ENCODE measurements at regions of chr6 and their contacts with region 1.

Region 1: DNA sequence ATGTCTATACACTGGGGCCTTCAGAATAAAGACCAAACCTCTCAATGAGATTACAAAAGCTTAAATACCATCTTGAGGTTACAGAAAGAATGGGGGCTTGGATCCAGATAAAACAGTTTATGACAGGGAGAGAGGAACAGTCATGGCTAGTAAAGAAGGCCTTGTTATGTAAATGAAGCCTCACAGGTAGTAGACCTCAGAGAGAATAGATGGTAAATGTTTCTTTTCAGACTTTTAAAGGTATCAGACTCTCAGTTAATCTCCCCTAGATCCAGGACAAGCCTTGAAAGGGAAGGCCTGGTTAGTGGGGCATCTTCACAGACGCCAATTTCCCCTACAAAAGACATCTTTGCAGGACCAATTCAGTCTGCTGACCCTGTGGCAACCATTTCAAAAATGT is 1325.6 kb downstream of the HACE1 start:
- DNase-seq: no peak
- H3K4me3 ChIP-seq: no peak overlapping the region
- H3K27ac ChIP-seq: no peak overlapping the region
- H3K4me1 ChIP-seq: no peaks in the 10 kb centered on the region
- H3K27me3 ChIP-seq: no peaks in the 10 kb centered on the region
- CTCF ChIP-seq: no peak
- EP300 ChIP-seq: no peak
- POLR2A ChIP-seq: no peak

Region 2: DNA sequence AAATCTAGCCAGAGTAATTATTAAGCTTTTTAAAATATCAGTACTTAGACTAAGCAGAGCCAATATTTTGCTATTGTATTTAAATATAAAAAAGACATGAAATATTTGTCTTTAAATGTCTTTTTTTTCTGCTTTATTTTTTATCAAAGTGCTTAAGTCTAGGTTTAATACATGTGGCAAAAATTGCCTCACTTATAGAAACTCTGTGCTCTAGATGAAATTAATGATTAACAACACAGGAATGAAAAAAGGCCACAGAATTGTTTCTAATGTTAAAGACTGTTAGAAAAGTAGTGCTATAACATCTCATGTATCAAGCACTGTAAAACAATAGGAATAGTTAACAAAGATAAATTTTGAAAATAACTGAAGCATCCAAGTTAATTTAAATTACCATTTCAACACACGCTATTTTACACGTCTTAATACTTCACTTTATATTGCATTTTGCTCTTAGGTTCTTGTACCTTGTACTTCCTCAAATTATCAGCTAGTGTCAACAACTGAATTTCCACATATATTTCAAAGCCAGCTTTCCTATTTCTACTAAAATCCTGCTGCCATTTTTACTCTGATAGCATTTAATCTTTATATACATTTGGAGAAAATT is 189.4 kb before region 1 on chr6:
- in situ Hi-C with region 1: no loop called
- intact Hi-C with region 1: no loop called
- DNase-seq: no peak
- H3K4me3 ChIP-seq: no peak overlapping the region
- H3K27ac ChIP-seq: no peak overlapping the region
- H3K4me1 ChIP-seq: no peaks in the 10 kb centered on the region
- H3K27me3 ChIP-seq: no peaks in the 10 kb centered on the region
- CTCF ChIP-seq: no peak
- EP300 ChIP-seq: no peak
- POLR2A ChIP-seq: no peak

Region 3: GRCh38 chr6:103511576-103511975 is 22.5 kb before region 1 on chr6:
- in situ Hi-C with region 1: no loop called
- intact Hi-C with region 1: loop called (anchors 1 kb)
- DNase-seq: no peak
- H3K4me3 ChIP-seq: no peak overlapping the region
- H3K27ac ChIP-seq: no peak overlapping the region
- H3K4me1 ChIP-seq: no peaks in the 10 kb centered on the region
- H3K27me3 ChIP-seq: no peaks in the 10 kb centered on the region
- CTCF ChIP-seq: no peak
- EP300 ChIP-seq: no peak
- POLR2A ChIP-seq: no peak

Region 4: DNA sequence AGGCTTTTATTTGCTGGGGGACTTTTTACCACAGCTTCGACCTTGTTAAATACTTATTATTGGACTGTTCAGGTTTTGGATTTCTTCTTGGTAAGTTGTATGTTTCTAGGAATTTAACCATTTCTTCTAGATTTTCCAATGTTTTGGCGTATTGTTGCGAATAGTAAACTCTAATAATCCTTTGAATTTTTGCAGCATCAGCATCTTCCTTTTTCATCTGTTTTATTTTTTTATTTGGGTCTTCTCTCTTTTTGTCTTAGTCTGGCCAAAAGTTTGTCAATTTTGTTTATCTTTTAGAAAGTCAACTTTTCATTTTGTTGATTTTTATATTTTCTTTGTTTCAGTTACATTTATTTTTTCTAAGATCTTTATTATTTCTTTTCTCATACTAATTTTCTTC is 53.6 kb after region 1 on chr6:
- in situ Hi-C with region 1: no loop called
- intact Hi-C with region 1: no loop called
- DNase-seq: no peak
- H3K4me3 ChIP-seq: no peak overlapping the region
- H3K27ac ChIP-seq: no peak overlapping the region
- H3K4me1 ChIP-seq: no peaks in the 10 kb centered on the region
- H3K27me3 ChIP-seq: no peaks in the 10 kb centered on the region
- CTCF ChIP-seq: no peak
- EP300 ChIP-seq: no peak
- POLR2A ChIP-seq: no peak